ENCODE measurements at regions of chr1 and their contacts with region 1.

Region 1: GRCh38 chr1:179365320-179366092 is at the start of gene AXDND1:
- DNase-seq: peak; percentile 88 to 95
- ATAC-seq: peak; percentile 91 to 97 (median 92)
- H3K4me3 ChIP-seq: peak within 1 kb of the TSS; percentile 79
- H3K4me3 Mint-ChIP-seq: peak within 1 kb of the TSS; percentile 92
- H3K27ac ChIP-seq: peak within 1 kb of the TSS; percentile 99
- H3K27ac Mint-ChIP-seq: peak within 1 kb of the TSS; percentile 98 to 99
- H3K4me1 ChIP-seq: peaks cover 10% of the 10 kb centered on the region
- H3K4me1 Mint-ChIP-seq: peaks cover 7 to 10% of the 10 kb centered on the region in 2 donors
- H3K27me3 ChIP-seq: no peaks in the 10 kb centered on the region
- H3K27me3 Mint-ChIP-seq: peaks cover 0 to 10% of the 10 kb centered on the region in 2 donors
- CTCF ChIP-seq: no peak
- total RNA-seq, gene AXDND1: 0.78 to 2.0 (median 1.7) TPM

Region 2: GRCh38 chr1:178532392-178532791 is 833.1 kb before region 1 on chr1:
- intact Hi-C with region 1: loop called (anchors 1 kb)
- DNase-seq: peak; percentile 76 to 86
- ATAC-seq: peak; percentile 78 to 96 (median 85)
- H3K4me3 ChIP-seq: no peak overlapping the region
- H3K4me3 Mint-ChIP-seq: no peak overlapping the region
- H3K27ac ChIP-seq: no peak overlapping the region
- H3K27ac Mint-ChIP-seq: no peak overlapping the region
- H3K4me1 ChIP-seq: no peaks in the 10 kb centered on the region
- H3K4me1 Mint-ChIP-seq: peaks cover 5 to 6% of the 10 kb centered on the region in 2 donors
- H3K27me3 ChIP-seq: no peaks in the 10 kb centered on the region
- H3K27me3 Mint-ChIP-seq: peaks cover 0 to 3% of the 10 kb centered on the region in 2 donors
- CTCF ChIP-seq: peak; percentile 96

Region 3: GRCh38 chr1:178725603-178726517 is 639.6 kb before region 1 on chr1:
- intact Hi-C with region 1: loop called (anchors 5 kb)
- DNase-seq: peak; percentile 30 to 81
- ATAC-seq: peak; percentile 72 to 80 (median 75)
- H3K4me3 ChIP-seq: peak overlapping the region; percentile 73
- H3K4me3 Mint-ChIP-seq: peak overlapping the region; percentile 86
- H3K27ac ChIP-seq: peak overlapping the region; percentile 58
- H3K27ac Mint-ChIP-seq: peak overlapping the region; percentile 37 to 77
- H3K4me1 ChIP-seq: peaks cover 3% of the 10 kb centered on the region
- H3K4me1 Mint-ChIP-seq: peaks cover 7 to 15% of the 10 kb centered on the region in 2 donors
- H3K27me3 ChIP-seq: no peaks in the 10 kb centered on the region
- H3K27me3 Mint-ChIP-seq: no peaks in the 10 kb centered on the region
- CTCF ChIP-seq: no peak

Region 4: DNA sequence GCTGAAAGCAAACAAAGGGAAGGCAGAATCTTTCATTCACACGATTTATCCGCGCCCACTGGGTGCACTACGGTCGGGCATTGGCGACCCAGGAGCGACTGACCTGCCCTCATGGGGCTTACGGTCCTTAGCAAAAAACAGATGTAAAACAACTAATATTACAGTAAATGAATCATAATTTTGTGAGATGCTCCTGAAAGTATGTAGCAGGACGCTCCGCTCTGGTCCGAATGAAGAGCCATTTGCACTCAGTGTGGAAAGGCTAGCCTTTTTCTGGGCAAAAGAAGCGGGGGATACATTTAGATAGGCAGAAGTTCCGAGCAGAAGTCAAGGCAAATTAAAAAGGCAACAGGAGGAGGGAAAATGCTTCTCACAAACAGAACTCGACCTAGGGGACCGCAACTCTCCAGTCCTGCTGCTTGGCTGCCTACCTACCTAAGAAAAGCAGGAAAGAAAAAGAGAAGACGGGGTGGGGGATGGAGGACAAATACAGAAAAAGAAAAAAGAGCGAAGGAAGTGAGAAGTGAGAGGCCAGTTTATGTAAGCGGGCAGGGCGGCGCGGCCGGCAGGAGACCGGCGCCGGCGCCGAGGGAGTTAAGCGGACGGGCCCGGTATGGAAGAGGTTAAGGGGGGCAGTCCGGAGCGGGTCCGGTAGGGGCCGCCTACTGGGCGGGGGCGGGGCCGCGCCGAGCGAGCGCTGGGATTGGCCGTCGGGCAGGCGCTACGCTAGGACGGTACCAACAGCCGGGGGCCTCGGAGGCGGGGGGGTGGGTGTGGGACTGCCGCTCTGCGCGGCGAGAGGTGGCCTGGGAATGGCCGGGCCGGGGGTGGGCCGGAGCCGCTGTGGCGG is 340.2 kb before region 1 on chr1 and contains the start of gene FAM20B:
- intact Hi-C with region 1: loop called (anchors 5 kb)
- DNase-seq: peak; percentile 90 to 92
- ATAC-seq: peak; percentile 86 to 96 (median 89)
- H3K4me3 ChIP-seq: peak within 1 kb of the TSS; percentile 67
- H3K4me3 Mint-ChIP-seq: peak within 1 kb of the TSS; percentile 93
- H3K27ac ChIP-seq: peak within 1 kb of the TSS; percentile 95
- H3K27ac Mint-ChIP-seq: peak within 1 kb of the TSS; percentile 84 to 95
- H3K4me1 ChIP-seq: peaks cover 9% of the 10 kb centered on the region
- H3K4me1 Mint-ChIP-seq: peaks cover 43 to 44% of the 10 kb centered on the region in 2 donors
- H3K27me3 ChIP-seq: no peaks in the 10 kb centered on the region
- H3K27me3 Mint-ChIP-seq: peaks cover 5 to 12% of the 10 kb centered on the region in 2 donors
- CTCF ChIP-seq: no peak
- total RNA-seq, gene FAM20B: 27.6 to 35.2 (median 29.0) TPM

Region 5: GRCh38 chr1:179107706-179108629 is 257.5 kb before region 1 on chr1:
- intact Hi-C with region 1: no loop called
- DNase-seq: no peak
- ATAC-seq: peak in 1 of 3 donors; percentile 17
- H3K4me3 ChIP-seq: no peak overlapping the region
- H3K4me3 Mint-ChIP-seq: no peak overlapping the region
- H3K27ac ChIP-seq: no peak overlapping the region
- H3K27ac Mint-ChIP-seq: no peak overlapping the region
- H3K4me1 ChIP-seq: no peaks in the 10 kb centered on the region
- H3K4me1 Mint-ChIP-seq: no peaks in the 10 kb centered on the region
- H3K27me3 ChIP-seq: no peaks in the 10 kb centered on the region
- H3K27me3 Mint-ChIP-seq: no peaks in the 10 kb centered on the region
- CTCF ChIP-seq: no peak

Region 6: GRCh38 chr1:179121159-179121938 is 244.2 kb before region 1 on chr1:
- intact Hi-C with region 1: loop called (anchors 1 kb)
- DNase-seq: peak in 1 of 2 donors; percentile 71
- ATAC-seq: peak in 1 of 3 donors; percentile 42
- H3K4me3 ChIP-seq: no peak overlapping the region
- H3K4me3 Mint-ChIP-seq: no peak overlapping the region
- H3K27ac ChIP-seq: no peak overlapping the region
- H3K27ac Mint-ChIP-seq: no peak overlapping the region
- H3K4me1 ChIP-seq: no peaks in the 10 kb centered on the region
- H3K4me1 Mint-ChIP-seq: no peaks in the 10 kb centered on the region
- H3K27me3 ChIP-seq: no peaks in the 10 kb centered on the region
- H3K27me3 Mint-ChIP-seq: no peaks in the 10 kb centered on the region
- CTCF ChIP-seq: peak; percentile 48

Region 7: DNA sequence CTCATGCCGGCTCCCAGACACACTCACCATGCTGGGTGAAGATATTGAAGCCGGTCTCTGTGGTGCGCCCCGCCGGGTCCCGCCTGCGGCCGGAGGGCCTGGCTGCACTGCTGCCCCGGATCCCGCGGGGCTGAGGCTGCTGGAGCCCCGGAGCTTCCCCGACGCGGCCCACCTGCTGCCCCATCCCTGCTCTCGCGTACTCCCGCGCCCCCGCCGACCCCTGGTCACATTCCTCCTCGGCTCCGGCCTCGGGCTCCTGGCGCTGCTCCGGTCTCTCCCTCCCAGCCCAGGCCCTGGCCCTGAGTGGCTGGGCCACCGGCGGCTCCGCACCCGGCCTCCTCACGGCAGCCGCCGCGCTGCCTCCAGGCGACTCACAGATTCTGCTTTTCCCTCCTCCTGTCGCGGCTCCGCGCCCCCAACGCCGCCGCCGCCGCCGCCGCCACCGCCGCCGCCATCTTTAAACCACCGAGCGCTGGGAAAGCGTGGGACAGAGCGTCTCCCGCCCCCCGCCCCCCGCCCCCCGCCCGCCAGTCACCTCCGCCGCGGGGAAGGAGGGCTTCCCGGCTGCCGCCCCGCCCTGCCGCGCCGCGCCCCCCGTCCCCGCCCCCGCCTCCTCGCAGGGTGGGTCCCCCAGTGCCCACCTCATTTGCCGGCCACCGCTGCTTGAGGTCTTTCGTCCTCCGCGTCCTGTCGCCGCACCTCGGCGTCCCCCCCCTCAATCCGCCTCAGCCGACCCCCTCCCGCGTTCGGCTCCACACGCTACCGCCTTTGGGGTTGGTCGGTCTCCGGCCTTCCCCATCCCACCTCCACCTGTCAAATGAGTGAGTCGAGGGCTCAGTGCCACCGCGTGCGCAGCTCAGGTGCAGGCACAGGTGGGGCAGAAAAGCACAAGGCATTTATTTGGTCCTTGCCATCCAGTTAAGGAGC is 136.0 kb before region 1 on chr1 and contains the start of gene ABL2:
- intact Hi-C with region 1: loop called (anchors 5 kb)
- DNase-seq: peak; percentile 44 to 65
- ATAC-seq: peak; percentile 70 to 74 (median 72)
- H3K4me3 ChIP-seq: peak within 1 kb of the TSS; percentile 63
- H3K4me3 Mint-ChIP-seq: peak within 1 kb of the TSS; percentile 91
- H3K27ac ChIP-seq: peak within 1 kb of the TSS; percentile 65
- H3K27ac Mint-ChIP-seq: peak within 1 kb of the TSS; percentile 72 to 84
- H3K4me1 ChIP-seq: peaks cover 10% of the 10 kb centered on the region
- H3K4me1 Mint-ChIP-seq: peaks cover 19 to 26% of the 10 kb centered on the region in 2 donors
- H3K27me3 ChIP-seq: no peaks in the 10 kb centered on the region
- H3K27me3 Mint-ChIP-seq: no peaks in the 10 kb centered on the region
- CTCF ChIP-seq: no peak
- total RNA-seq, gene ABL2: 11.1 to 16.3 (median 12.9) TPM

Region 8: GRCh38 chr1:179293340-179294327 is 71.9 kb before region 1 on chr1 and contains the start of gene SOAT1:
- intact Hi-C with region 1: loop called (anchors 2 kb)
- DNase-seq: peak; percentile 93 to 95
- ATAC-seq: peak; percentile 95 to 99 (median 98)
- H3K4me3 ChIP-seq: peak within 1 kb of the TSS; percentile 92
- H3K4me3 Mint-ChIP-seq: peak within 1 kb of the TSS; percentile 98
- H3K27ac ChIP-seq: peak within 1 kb of the TSS; percentile 93
- H3K27ac Mint-ChIP-seq: peak within 1 kb of the TSS; percentile 85 to 97
- H3K4me1 ChIP-seq: peaks cover 28% of the 10 kb centered on the region
- H3K4me1 Mint-ChIP-seq: peaks cover 40 to 46% of the 10 kb centered on the region in 2 donors
- H3K27me3 ChIP-seq: no peaks in the 10 kb centered on the region
- H3K27me3 Mint-ChIP-seq: no peaks in the 10 kb centered on the region
- CTCF ChIP-seq: peak; percentile 8
- total RNA-seq, gene SOAT1: 36.9 to 57.9 (median 51.3) TPM

Measured in natural killer cell (primary cell).